Psoas muscle (tissue), 8 donors: ENCODE measurements at regions of chr16 and their contacts with region 1.

Region 1: GRCh38 chr16:50806099-50807062 is 64.5 kb downstream of the CYLD start:
- DNase-seq: peak; percentile 80 to 90
- ATAC-seq: peak; percentile 90 to 95 (median 93)
- H3K4me3 ChIP-seq: peak overlapping the region; percentile 46
- H3K27ac ChIP-seq: peak overlapping the region; percentile 28
- H3K4me1 ChIP-seq: peaks cover 7% of the 10 kb centered on the region
- H3K27me3 ChIP-seq: no peaks in the 10 kb centered on the region
- CTCF ChIP-seq: peak; percentile 93

Region 2: DNA sequence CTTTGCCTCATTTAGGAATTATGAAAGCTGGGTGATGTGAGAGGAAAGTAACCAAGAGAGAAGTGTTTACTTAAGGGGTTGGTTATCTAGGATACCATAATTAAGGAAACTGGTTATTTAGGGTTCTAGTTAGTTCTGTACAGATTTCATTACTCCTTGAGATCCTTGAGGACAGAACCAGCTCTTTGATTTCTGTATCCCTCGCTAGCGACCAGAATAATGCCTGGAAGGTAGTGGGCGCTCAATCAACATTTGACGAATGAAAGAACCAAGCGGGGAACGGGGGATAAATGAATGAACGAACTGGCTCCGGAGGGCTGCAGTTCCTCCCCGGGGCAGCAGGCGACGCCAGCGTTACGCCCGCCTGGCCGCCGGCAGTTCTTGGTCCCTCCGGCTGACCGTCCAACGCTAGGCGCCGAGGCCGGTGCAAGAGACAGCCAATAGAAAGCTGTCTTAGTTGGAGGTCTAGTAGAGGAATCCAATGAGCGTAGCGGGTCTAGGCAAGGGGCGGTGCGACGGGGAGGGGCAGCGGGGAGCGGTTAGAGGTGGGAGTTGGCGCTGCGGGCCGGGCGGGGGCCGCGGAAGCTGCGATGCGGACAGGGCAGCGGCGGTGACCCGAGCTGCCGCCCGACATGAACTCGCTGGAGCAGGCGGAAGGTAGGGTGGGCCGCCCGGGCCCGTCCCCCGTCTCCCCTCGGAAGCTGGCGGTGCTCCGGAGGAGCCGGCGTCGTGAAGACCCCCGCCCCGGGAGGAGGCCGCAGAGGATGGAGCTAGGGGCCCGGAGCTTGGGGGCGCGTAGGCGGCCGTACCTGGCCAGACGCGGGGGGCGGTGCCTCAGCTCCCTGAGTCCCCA is 781.5 kb before region 1 on chr16 and contains the start of gene CNEP1R1:
- intact Hi-C with region 1: loop called in 1 of 2 experiments (anchors 10 kb)
- DNase-seq: peak; percentile 94 to 97
- ATAC-seq: peak; percentile 100
- H3K4me3 ChIP-seq: peak within 1 kb of the TSS; percentile 100
- H3K27ac ChIP-seq: peak within 1 kb of the TSS; percentile 85
- H3K4me1 ChIP-seq: peaks cover 10% of the 10 kb centered on the region
- H3K27me3 ChIP-seq: no peaks in the 10 kb centered on the region
- CTCF ChIP-seq: peak; percentile 100
- total RNA-seq, gene CNEP1R1: 10.9 to 15.8 (median 14.8) TPM

Region 3: DNA sequence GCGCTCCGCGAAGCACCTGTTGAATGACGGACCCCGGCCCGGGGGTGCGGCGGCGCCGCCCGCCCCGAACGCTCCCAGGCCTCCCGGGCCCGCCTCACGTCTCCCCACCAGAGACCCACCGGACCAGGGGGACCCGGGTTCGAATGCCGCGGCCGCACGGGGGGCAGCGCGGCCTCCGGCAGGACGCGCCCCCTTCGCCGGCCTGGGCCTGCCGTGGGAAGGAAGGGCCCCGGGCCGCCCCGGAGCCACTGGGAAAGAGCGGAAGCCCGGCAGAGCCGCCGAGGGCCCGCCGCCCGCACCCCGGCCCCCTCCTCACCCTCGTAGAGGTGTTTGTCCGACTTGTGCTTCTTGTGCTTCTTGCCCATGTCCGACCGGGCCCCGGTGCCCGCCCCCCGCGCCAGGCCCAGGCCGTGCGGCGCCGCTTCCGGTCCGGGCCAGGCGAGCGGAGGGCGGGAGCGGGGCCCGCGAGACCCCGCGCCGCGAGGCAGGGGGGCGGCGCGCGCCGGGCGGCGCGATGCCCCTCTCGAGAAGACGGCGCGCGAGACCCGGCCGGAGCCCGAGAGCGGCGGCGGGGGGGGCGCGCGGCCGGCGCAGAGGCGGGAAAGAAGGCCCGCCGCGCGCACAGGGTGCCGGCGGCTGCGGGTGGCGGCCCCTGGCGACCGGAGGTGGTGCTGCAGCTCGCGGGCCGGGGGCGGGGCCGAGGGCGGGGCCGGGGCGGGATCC is 437.8 kb before region 1 on chr16 and contains the start of gene BRD7:
- intact Hi-C with region 1: loop called in 1 of 2 experiments (anchors 5 kb)
- DNase-seq: peak; percentile 69 to 80
- ATAC-seq: peak; percentile 81 to 90 (median 84)
- H3K4me3 ChIP-seq: peak within 1 kb of the TSS; percentile 94
- H3K27ac ChIP-seq: peak within 1 kb of the TSS; percentile 82
- H3K4me1 ChIP-seq: peaks cover 22% of the 10 kb centered on the region
- H3K27me3 ChIP-seq: no peaks in the 10 kb centered on the region
- CTCF ChIP-seq: peak; percentile 77
- total RNA-seq, gene BRD7: 47.5 to 77.1 (median 52.4) TPM

Region 4: GRCh38 chr16:50593410-50594150 is 212.8 kb before region 1 on chr16:
- intact Hi-C with region 1: loop called (anchors 5 to 10 kb)
- DNase-seq: no peak
- ATAC-seq: no peak
- H3K4me3 ChIP-seq: no peak overlapping the region
- H3K27ac ChIP-seq: no peak overlapping the region
- H3K4me1 ChIP-seq: no peaks in the 10 kb centered on the region
- H3K27me3 ChIP-seq: no peaks in the 10 kb centered on the region
- CTCF ChIP-seq: no peak

Region 5: GRCh38 chr16:50696575-50697420 is 109.6 kb before region 1 on chr16:
- intact Hi-C with region 1: loop called in 1 of 2 experiments (anchors 10 kb)
- DNase-seq: peak; percentile 74 to 85
- ATAC-seq: peak; percentile 27 to 55 (median 34)
- H3K4me3 ChIP-seq: no peak overlapping the region
- H3K27ac ChIP-seq: peak overlapping the region; percentile 67
- H3K4me1 ChIP-seq: peaks cover 37% of the 10 kb centered on the region
- H3K27me3 ChIP-seq: no peaks in the 10 kb centered on the region
- CTCF ChIP-seq: no peak

Region 6: GRCh38 chr16:50763211-50763610 is 43.2 kb before region 1 on chr16:
- intact Hi-C with region 1: loop called in 1 of 2 experiments (anchors 5 kb)
- DNase-seq: no peak
- ATAC-seq: no peak
- H3K4me3 ChIP-seq: no peak overlapping the region
- H3K27ac ChIP-seq: no peak overlapping the region
- H3K4me1 ChIP-seq: peaks cover 14% of the 10 kb centered on the region
- H3K27me3 ChIP-seq: no peaks in the 10 kb centered on the region
- CTCF ChIP-seq: no peak

Region 7: GRCh38 chr16:50778284-50779163 is 27.9 kb before region 1 on chr16:
- intact Hi-C with region 1: no loop called
- DNase-seq: no peak
- ATAC-seq: peak in 3 of 4 donors; percentile 37 to 71 (median 42)
- H3K4me3 ChIP-seq: no peak overlapping the region
- H3K27ac ChIP-seq: peak overlapping the region; percentile 41
- H3K4me1 ChIP-seq: peaks cover 20% of the 10 kb centered on the region
- H3K27me3 ChIP-seq: no peaks in the 10 kb centered on the region
- CTCF ChIP-seq: no peak

Region 8: GRCh38 chr16:50974438-50975036 is 168.2 kb after region 1 on chr16:
- intact Hi-C with region 1: no loop called
- DNase-seq: no peak
- ATAC-seq: no peak
- H3K4me3 ChIP-seq: no peak overlapping the region
- H3K27ac ChIP-seq: no peak overlapping the region
- H3K4me1 ChIP-seq: no peaks in the 10 kb centered on the region
- H3K27me3 ChIP-seq: peaks cover 0 to 2% (median 0%) of the 10 kb centered on the region in 3 donors
- CTCF ChIP-seq: no peak